WTC11 (cell line): ENCODE measurements at regions of chr21 and their contacts with region 1.

Region 1: DNA sequence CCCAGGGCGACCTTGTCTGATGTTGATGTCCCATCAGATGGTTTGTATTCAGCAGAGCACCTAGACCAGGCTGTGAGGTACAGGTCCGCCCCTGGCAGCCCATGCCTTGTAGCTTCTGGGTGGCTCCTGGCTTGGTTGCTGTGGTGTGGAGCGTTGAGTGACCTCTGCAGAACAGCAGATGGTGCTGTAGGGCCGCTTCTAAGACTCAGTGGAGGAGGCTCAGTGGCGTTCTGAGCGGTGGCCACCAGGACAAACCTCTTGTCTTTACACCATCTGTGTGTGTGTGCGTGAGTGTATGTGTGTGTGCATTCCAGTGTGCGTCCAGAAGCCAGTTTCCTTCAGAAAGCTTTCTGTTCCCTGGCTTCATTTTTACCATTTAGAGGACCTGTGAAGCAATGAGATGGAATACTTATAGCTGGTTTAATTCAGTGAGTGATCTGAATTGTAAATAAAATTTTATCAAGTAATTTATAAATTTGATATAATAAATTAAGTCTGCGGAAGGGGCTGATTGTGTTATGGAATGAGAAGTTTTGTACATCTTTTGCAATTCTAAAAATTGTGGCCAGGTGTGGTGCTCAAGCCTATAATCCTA is 66.1 kb downstream of the ADARB1 start:
- DNase-seq: peak; percentile 85
- ATAC-seq: peak; percentile 95
- H3K4me3 Mint-ChIP-seq: no peak overlapping the region
- H3K27ac Mint-ChIP-seq: no peak overlapping the region
- H3K4me1 Mint-ChIP-seq: peaks cover 3% of the 10 kb centered on the region; the same call in 1 of the 2 replicates
- H3K27me3 Mint-ChIP-seq: no peaks in the 10 kb centered on the region
- CTCF ChIP-seq: peak; percentile 54; the same call in 1 of the 2 replicates

Region 2: DNA sequence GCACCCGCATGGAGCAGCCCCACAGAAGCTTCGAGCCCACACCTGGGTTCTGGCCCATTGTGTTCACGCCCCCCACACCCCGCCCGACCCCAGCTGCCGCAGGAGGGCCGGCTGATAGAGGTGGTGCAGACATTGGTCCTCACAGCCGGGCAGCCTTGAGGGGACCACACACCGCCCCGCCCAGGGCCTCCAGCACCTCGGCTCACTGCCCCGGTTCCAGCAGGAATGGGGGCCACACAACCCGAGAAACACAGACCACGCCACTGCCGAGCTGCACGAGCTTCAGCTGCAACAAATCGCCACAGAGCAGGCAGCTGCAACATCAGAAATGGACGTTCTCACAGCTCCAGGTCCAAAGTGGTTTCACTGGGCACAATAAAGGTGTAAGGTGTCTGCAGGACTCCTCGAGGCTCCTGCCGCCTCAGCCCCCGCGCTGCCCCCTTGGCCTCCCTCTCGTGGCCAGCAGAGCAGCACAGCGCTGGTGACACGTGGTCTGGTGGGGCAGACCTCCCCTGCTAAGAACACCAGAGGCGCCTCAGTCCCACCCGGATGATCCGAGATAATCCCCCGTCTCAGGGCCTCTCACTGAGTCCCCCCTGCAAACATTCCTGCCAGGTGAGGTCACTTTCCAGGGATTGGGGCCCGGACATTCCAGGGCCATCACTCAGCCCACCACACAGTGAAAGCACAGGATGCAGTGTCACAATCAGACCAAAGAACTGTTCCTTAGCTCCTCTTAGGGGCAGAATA is 128.4 kb before region 1 on chr21:
- CTCF ChIA-PET with region 1: interaction called, 34 read pairs
- POLR2A ChIA-PET with region 1: no interaction called
- DNase-seq: peak; percentile 62
- ATAC-seq: peak; percentile 85
- H3K4me3 Mint-ChIP-seq: no peak overlapping the region
- H3K27ac Mint-ChIP-seq: no peak overlapping the region
- H3K4me1 Mint-ChIP-seq: peaks cover 19% of the 10 kb centered on the region
- H3K27me3 Mint-ChIP-seq: peaks cover 24% of the 10 kb centered on the region
- CTCF ChIP-seq: no peak

Region 3: DNA sequence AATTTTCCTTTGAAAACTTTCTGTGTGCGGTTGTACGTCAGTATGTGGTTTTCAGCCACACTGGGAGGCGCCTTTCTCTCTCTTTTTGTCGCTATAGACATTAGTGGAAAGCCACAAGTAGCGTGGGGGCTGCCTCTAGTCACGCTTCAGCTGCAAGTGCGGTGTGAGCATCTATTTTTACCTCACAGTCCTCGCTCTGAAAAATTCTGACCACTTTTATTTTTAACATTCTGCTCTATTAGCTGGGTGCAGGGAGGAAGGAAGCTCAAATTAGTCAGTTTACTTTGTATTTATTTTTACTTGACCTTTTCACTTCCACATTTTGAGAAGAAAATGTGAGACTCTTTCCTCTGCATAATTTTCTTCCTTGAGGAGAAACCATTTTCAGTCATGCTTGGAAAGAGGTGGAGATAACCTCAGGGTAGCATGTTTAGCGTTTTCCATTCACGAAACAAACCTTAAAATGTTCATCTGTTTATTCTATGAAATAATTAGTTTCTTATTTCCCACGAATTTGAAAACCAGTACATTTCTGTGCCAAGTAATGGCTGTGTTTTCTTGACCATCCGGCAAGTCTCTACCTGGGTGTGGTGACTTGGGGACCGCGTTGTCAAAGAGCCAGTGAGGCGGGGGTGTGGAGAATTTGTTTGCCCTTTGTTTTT is 30.5 kb before region 1 on chr21:
- CTCF ChIA-PET with region 1: interaction called, 13 read pairs
- POLR2A ChIA-PET with region 1: no interaction called
- DNase-seq: no peak
- ATAC-seq: no peak
- H3K4me3 Mint-ChIP-seq: no peak overlapping the region
- H3K27ac Mint-ChIP-seq: no peak overlapping the region
- H3K4me1 Mint-ChIP-seq: no peaks in the 10 kb centered on the region
- H3K27me3 Mint-ChIP-seq: no peaks in the 10 kb centered on the region
- CTCF ChIP-seq: no peak

Region 4: GRCh38 chr21:45161038-45161945 is 20.8 kb after region 1 on chr21:
- CTCF ChIA-PET with region 1: interaction called, 11 read pairs
- POLR2A ChIA-PET with region 1: no interaction called
- DNase-seq: no peak
- ATAC-seq: peak; percentile 67
- H3K4me3 Mint-ChIP-seq: no peak overlapping the region
- H3K27ac Mint-ChIP-seq: peak overlapping the region; percentile 89; the same call in 1 of the 2 replicates
- H3K4me1 Mint-ChIP-seq: peaks cover 19% of the 10 kb centered on the region
- H3K27me3 Mint-ChIP-seq: no peaks in the 10 kb centered on the region
- CTCF ChIP-seq: no peak

Region 5: DNA sequence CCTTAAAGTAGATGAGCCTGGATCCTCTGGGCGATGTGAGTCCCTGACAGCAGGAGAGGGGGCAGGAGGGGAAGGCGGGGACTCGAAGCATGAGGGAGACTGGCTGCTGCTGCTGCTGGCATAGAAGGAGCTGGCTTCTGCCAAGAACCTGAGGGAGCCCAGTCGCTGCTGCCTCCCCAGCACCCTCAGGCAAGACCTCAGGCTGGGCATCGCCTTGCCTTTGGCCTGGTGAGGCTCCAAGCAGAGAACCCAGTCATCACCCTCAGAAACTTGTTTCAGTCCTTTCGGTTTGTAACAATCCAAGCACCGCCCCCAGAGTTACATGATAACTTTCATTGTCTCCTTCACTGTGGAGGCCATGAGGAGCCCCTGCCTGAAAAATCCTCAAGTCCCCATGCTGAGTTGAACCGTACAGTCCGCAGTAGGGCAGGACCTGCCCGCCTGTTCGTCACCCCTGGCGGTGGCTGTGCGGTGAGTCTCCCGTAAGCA is 108.5 kb after region 1 on chr21:
- CTCF ChIA-PET with region 1: interaction called, 16 read pairs
- POLR2A ChIA-PET with region 1: no interaction called
- DNase-seq: no peak
- ATAC-seq: peak; percentile 62
- H3K4me3 Mint-ChIP-seq: peak overlapping the region; percentile 58
- H3K27ac Mint-ChIP-seq: no peak overlapping the region
- H3K4me1 Mint-ChIP-seq: peaks cover 17% of the 10 kb centered on the region
- H3K27me3 Mint-ChIP-seq: peaks cover 10% of the 10 kb centered on the region
- CTCF ChIP-seq: no peak

Region 6: GRCh38 chr21:45309069-45309986 is 168.9 kb after region 1 on chr21:
- CTCF ChIA-PET with region 1: interaction called, 16 read pairs
- POLR2A ChIA-PET with region 1: no interaction called
- DNase-seq: peak; percentile 89
- ATAC-seq: peak; percentile 89
- H3K4me3 Mint-ChIP-seq: no peak overlapping the region
- H3K27ac Mint-ChIP-seq: peak overlapping the region; percentile 39; the same call in 1 of the 2 replicates
- H3K4me1 Mint-ChIP-seq: peaks cover 6% of the 10 kb centered on the region; the same call in 1 of the 2 replicates
- H3K27me3 Mint-ChIP-seq: peaks cover 7% of the 10 kb centered on the region
- CTCF ChIP-seq: peak; percentile 64

Region 7: DNA sequence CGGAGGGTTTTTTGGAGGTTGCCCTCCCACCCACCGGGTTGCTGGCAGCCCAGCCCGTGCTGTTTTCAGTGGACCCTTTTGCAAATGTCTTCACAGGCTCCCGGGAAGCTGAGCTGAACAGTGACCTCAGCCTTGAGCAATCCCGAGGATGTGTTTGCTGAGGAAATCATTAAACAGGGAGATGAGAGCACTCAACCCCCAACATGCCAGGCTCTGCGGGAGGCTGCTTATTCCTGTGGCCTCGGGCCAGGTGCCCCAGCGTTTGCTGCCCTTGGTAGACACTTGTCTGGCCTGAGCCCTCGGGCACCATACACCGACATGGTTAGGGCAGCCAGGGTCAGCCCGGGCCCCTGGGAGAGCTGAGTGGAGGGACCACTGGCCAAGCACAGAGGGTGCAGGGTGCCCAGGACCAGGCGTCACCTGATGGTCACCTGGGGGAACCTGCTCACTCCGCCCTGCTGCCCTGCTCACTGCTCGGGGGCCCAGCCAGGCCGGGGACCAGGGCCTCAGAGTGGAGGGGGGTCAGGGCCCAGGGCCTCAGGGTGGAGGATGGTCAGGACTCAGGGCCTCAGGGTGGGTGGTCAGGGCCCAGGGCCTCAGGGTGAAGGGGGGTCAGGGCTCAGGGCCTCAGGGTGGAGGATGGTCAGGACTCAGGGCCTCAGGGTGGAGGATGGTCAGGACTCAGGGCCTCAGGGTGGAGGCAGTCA is 189.8 kb after region 1 on chr21:
- CTCF ChIA-PET with region 1: no interaction called
- POLR2A ChIA-PET with region 1: no interaction called
- DNase-seq: no peak
- ATAC-seq: peak; percentile 46
- H3K4me3 Mint-ChIP-seq: no peak overlapping the region
- H3K27ac Mint-ChIP-seq: peak overlapping the region; percentile 76; the same call in 1 of the 2 replicates
- H3K4me1 Mint-ChIP-seq: peaks cover 25% of the 10 kb centered on the region
- H3K27me3 Mint-ChIP-seq: no peaks in the 10 kb centered on the region; the same call in 1 of the 2 replicates
- CTCF ChIP-seq: no peak

Region 8: GRCh38 chr21:45454926-45455673 is 314.7 kb after region 1 on chr21:
- CTCF ChIA-PET with region 1: no interaction called
- POLR2A ChIA-PET with region 1: no interaction called
- DNase-seq: no peak
- ATAC-seq: peak; percentile 27; the same call in 1 of the 2 replicates
- H3K4me3 Mint-ChIP-seq: no peak overlapping the region
- H3K27ac Mint-ChIP-seq: no peak overlapping the region; the same call in 1 of the 2 replicates
- H3K4me1 Mint-ChIP-seq: peaks cover 3% of the 10 kb centered on the region; the same call in 1 of the 2 replicates
- H3K27me3 Mint-ChIP-seq: no peaks in the 10 kb centered on the region
- CTCF ChIP-seq: no peak

Region 9: GRCh38 chr21:45800339-45801080 is 660.1 kb after region 1 on chr21:
- CTCF ChIA-PET with region 1: no interaction called
- POLR2A ChIA-PET with region 1: no interaction called
- DNase-seq: no peak
- ATAC-seq: no peak
- H3K4me3 Mint-ChIP-seq: no peak overlapping the region
- H3K27ac Mint-ChIP-seq: no peak overlapping the region
- H3K4me1 Mint-ChIP-seq: no peaks in the 10 kb centered on the region
- H3K27me3 Mint-ChIP-seq: no peaks in the 10 kb centered on the region
- CTCF ChIP-seq: no peak